ENCODE measurements at regions of chr10 and their contacts with region 1.

Region 1: DNA sequence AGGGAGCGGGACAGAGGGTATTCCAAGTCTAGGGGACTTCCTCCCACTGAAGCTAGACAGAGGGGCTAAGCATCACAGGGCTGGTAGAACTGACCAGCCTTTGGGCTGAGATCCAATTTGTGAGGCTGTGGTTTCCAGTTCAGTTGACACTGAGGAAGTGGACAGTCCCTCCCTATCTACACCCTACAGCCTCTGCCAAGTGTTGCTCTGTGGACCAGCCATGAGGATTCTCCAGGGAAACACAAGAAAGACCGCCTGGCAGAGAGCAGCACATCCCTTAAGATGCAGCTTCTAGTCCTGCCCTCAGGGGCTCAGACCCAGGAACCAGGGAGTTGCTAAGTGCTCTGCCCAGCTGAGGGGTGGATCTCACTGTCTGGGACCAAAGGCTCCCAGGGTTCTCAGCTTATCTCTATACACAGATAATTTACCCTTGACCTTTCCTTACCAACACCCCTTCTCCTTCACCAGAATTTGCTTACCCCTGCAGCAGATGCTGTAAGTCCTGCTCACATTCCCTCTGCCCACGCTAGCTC is 252.0 kb downstream of the SKIDA1 start:
- DNase-seq: peak; percentile 20 to 35 (median 23)
- ATAC-seq: peak; percentile 73
- H3K4me3 ChIP-seq: no peak overlapping the region
- H3K27ac ChIP-seq: peak overlapping the region; percentile 19; the same call in 1 of the 3 replicates
- H3K4me1 ChIP-seq: peaks cover 0 to 13% of the 10 kb centered on the region in 2 experiments; a peak in 3 of 5 replicates
- H3K27me3 ChIP-seq: no peaks in the 10 kb centered on the region
- CTCF ChIP-seq: no peak
- EP300 ChIP-seq: no peak
- POLR2A ChIP-seq: no peak
- RAD21 ChIP-seq: no peak; a peak in 1 of 4 replicates

Region 2: GRCh38 chr10:20858292-20859124 is 415.0 kb before region 1 on chr10:
- CTCF ChIA-PET with region 1: interaction called, 21 read pairs
- POLR2A ChIA-PET with region 1: no interaction called
- in situ Hi-C with region 1: no loop called
- intact Hi-C with region 1: loop called (anchors 1 kb)
- DNase-seq: peak in 1 of 4 experiments; percentile 33
- ATAC-seq: peak; percentile 68
- H3K4me3 ChIP-seq: no peak overlapping the region
- H3K27ac ChIP-seq: no peak overlapping the region
- H3K4me1 ChIP-seq: no peaks in the 10 kb centered on the region
- H3K27me3 ChIP-seq: no peaks in the 10 kb centered on the region
- CTCF ChIP-seq: peak in 2 of 3 experiments; percentile 16 to 68; a peak in 3 of 6 replicates
- EP300 ChIP-seq: no peak
- POLR2A ChIP-seq: no peak
- RAD21 ChIP-seq: peak; percentile 67 to 84

Region 3: GRCh38 chr10:20871970-20872369 is 401.5 kb before region 1 on chr10:
- CTCF ChIA-PET with region 1: no interaction called
- POLR2A ChIA-PET with region 1: no interaction called
- in situ Hi-C with region 1: loop called (anchors 5 kb)
- intact Hi-C with region 1: no loop called
- DNase-seq: no peak
- ATAC-seq: no peak
- H3K4me3 ChIP-seq: no peak overlapping the region
- H3K27ac ChIP-seq: no peak overlapping the region
- H3K4me1 ChIP-seq: no peaks in the 10 kb centered on the region
- H3K27me3 ChIP-seq: no peaks in the 10 kb centered on the region
- CTCF ChIP-seq: no peak
- EP300 ChIP-seq: no peak
- POLR2A ChIP-seq: no peak
- RAD21 ChIP-seq: no peak

Region 4: DNA sequence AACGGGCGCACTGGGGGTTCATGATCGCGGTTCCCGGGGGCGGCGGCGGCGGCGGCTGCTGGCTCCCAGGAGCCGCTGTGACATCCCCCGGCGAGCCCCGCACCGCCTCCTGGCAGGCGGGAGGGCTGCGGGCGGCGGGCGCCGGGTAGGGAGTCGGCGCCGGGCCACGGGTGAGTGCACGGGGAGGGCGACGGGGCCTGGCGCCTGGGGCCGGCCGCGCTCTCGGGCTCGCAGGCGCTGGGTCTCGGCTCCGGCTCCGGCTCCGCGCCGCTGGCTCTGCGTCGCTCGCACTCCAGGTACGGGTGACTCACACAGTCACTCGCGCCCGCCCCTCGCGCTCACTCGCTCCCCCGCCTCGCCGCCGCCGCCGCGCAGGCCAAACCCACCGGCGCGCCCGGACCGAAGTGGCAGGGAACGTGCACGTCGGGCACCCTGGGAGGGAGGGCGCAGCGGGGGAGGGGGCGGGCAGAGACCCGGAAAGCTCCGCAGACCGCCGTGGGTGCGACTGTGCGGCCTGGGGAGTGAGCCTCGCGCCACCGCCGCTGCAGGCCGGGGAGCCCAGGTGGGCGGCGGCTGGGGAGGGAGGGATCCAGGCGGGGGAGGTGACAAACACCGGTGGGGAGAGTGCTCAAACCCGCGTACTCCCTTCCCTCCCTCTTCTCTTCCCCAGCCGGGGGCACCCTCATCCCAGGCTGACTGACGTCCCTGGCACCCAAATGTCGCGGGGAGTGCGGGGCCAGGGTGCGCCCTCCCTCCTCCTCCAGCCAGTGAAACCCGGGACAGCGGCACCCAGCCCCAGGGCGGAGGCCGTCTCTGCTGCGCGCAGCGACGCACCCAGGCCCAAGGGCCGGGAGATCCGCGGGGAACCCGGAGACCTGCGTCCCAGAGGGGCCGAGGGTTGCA is 99.4 kb before region 1 on chr10:
- CTCF ChIA-PET with region 1: no interaction called
- POLR2A ChIA-PET with region 1: no interaction called
- in situ Hi-C with region 1: no loop called
- intact Hi-C with region 1: loop called (anchors 2 kb)
- DNase-seq: peak; percentile 55 to 68 (median 58)
- ATAC-seq: peak; percentile 82
- H3K4me3 ChIP-seq: peak overlapping the region; percentile 52
- H3K27ac ChIP-seq: peak overlapping the region; percentile 14
- H3K4me1 ChIP-seq: peaks cover 12 to 21% of the 10 kb centered on the region in 2 experiments; a peak in 4 of 5 replicates
- H3K27me3 ChIP-seq: no peaks in the 10 kb centered on the region
- CTCF ChIP-seq: no peak; a peak in 1 of 6 replicates
- EP300 ChIP-seq: no peak
- POLR2A ChIP-seq: no peak
- RAD21 ChIP-seq: peak in 1 of 2 experiments; percentile 33; a peak in 2 of 4 replicates

Region 5: GRCh38 chr10:21399392-21400035 is 126.0 kb after region 1 on chr10:
- CTCF ChIA-PET with region 1: no interaction called
- POLR2A ChIA-PET with region 1: no interaction called
- in situ Hi-C with region 1: no loop called
- intact Hi-C with region 1: no loop called
- DNase-seq: no peak
- ATAC-seq: no peak
- H3K4me3 ChIP-seq: no peak overlapping the region
- H3K27ac ChIP-seq: no peak overlapping the region
- H3K4me1 ChIP-seq: no peaks in the 10 kb centered on the region; a peak in 1 of 5 replicates
- H3K27me3 ChIP-seq: peaks cover 9 to 19% of the 10 kb centered on the region in 2 experiments; a peak in 2 of 5 replicates
- CTCF ChIP-seq: no peak
- EP300 ChIP-seq: no peak
- POLR2A ChIP-seq: no peak
- RAD21 ChIP-seq: no peak